CD4-positive, alpha-beta memory T cell (primary cell): ENCODE measurements at regions of chr2 and their contacts with region 1.

Region 1: DNA sequence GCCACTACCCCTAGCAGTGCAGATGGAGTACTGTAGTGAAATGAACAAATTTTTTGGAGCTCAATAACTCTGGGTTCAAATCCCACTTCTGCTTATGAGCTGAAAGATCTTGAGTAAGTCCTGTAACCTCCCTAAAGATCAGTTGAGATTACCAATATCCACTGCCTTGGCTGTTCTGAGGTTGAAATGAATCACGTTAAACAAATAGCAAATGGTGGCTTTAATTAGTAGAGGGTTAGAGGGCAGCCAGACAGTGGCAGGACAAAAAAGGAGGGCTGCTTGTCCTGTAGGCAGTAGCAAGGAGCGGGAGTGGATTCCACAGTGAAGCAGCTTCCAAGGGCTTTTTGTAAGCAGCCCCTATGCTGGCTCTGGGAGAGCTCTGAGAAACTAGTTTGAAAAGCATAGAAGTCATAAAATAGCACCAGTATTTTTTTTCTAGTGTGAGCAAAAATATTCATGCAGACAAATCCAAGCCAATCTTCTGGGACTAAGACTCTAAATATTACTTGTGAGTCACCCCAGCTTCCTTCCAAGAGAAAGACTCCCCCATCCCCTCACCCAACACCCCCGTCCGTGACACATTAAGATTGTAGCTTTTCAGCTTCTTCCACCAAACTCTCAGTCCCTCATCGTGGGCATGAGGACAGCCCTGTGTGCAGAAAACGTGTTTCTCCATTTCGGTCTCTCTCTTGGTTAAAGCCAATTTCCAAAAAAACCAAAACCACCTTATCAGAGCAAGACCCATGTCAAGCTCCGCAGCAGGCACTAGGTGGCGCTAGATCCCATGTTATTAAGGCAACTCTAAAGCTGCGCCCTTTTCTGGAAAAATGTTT is 123.5 kb upstream of the LGALSL start:
- DNase-seq: peak; percentile 70 to 79 (median 74)
- H3K4me3 ChIP-seq: no peak overlapping the region
- H3K4me3 Mint-ChIP-seq: peak overlapping the region in 7 of 8 donors; percentile 25 to 83 (median 75)
- H3K27ac ChIP-seq: no peak overlapping the region
- H3K27ac Mint-ChIP-seq: peak overlapping the region in 6 of 7 donors; percentile 33 to 92 (median 86)
- H3K4me1 ChIP-seq: peaks cover 38% of the 10 kb centered on the region
- H3K4me1 Mint-ChIP-seq: peaks cover 28 to 46% (median 34%) of the 10 kb centered on the region in 4 donors
- H3K27me3 ChIP-seq: no peaks in the 10 kb centered on the region
- H3K27me3 Mint-ChIP-seq: no peaks in the 10 kb centered on the region

Region 2: DNA sequence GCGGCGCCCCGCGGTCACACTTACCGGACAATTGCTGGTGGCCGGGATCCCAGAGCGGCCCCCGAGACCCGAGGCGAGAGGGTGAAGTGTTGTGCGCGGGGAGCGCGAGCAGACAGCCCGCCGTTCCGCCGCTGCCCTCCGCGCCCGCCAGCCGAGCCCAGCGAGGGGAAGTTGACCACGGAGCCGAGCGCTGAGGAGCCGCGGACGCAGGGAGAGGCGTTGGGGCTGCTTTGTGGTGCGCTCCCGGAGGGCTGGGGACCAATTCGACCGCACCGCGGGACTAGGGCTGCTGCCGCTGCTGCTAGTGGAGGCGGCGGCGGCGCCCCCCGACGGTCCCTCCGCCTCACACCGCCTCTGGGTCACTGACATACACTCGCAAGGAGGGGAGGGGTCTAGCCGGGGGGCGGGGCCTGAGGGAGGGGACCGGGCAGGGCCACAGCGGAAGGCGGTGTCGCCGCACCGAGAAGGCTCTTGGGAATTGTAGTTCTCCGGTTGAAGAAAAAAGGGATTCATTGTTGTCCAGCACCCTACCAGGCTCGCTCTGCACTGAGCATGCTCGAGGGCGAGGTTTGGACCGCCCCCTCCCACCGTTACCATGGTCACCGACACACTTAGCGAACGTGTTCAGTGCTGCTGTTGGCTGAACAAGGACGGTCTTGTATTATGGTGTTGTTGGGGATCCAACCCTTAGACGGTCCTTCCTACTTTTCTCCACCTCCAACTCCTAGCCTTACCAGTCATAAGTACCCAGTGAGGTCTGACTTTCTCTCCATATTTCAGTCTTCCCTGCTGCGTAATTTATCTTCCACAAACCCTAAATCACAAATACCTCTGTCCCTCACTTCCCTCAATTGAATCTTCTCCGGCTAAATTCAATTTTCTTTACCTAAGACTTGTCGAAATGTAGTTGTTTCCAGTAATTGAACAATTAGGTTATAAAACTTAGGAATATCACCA is 186.2 kb before region 1 on chr2 and contains the start of gene PELI1:
- CTCF ChIA-PET with region 1: interaction called, 24 read pairs
- POLR2A ChIA-PET with region 1: interaction called, 51 read pairs
- intact Hi-C with region 1: loop called (anchors 1 kb)
- DNase-seq: peak; percentile 86 to 94 (median 90)
- H3K4me3 ChIP-seq: peak within 1 kb of the TSS; percentile 61 to 81
- H3K4me3 Mint-ChIP-seq: peak within 1 kb of the TSS; percentile 92 to 99 (median 98)
- H3K27ac ChIP-seq: peak within 1 kb of the TSS; percentile 88
- H3K27ac Mint-ChIP-seq: peak within 1 kb of the TSS; percentile 96 to 99 (median 98)
- H3K4me1 ChIP-seq: peaks cover 53% of the 10 kb centered on the region
- H3K4me1 Mint-ChIP-seq: peaks cover 22 to 39% (median 25%) of the 10 kb centered on the region in 4 donors
- H3K27me3 ChIP-seq: no peaks in the 10 kb centered on the region
- H3K27me3 Mint-ChIP-seq: no peaks in the 10 kb centered on the region
- total RNA-seq, gene PELI1: 36.7 to 40.5 TPM

Region 3: GRCh38 chr2:64283641-64284361 is 46.7 kb before region 1 on chr2:
- CTCF ChIA-PET with region 1: interaction called, 7 read pairs
- POLR2A ChIA-PET with region 1: interaction called, 13 read pairs
- intact Hi-C with region 1: loop called (anchors 5 kb)
- DNase-seq: peak in 4 of 5 donors; percentile 29 to 49 (median 42)
- H3K4me3 ChIP-seq: peak overlapping the region; percentile 24 to 51
- H3K4me3 Mint-ChIP-seq: no peak overlapping the region
- H3K27ac ChIP-seq: peak overlapping the region; percentile 18
- H3K27ac Mint-ChIP-seq: no peak overlapping the region
- H3K4me1 ChIP-seq: peaks cover 19% of the 10 kb centered on the region
- H3K4me1 Mint-ChIP-seq: no peaks in the 10 kb centered on the region
- H3K27me3 ChIP-seq: no peaks in the 10 kb centered on the region
- H3K27me3 Mint-ChIP-seq: no peaks in the 10 kb centered on the region

Region 4: DNA sequence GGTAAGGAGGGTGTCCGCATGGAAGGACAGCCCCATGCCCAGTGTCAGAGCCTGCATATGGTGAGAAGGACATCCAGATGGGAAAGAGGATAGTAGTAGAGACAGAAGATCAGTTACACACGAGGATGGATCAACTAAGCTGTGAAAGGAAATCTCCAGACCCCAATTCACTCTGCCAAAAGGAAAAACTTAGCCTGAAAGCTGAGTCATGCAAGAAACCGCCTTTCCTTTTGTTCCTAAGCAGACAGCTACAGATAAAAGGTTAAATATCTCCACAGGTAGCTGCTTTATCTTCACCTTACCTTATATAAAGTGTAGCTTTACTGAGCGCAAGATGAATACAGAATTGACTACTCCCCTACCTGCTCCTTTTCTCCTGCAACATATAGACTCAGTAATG is 56.2 kb after region 1 on chr2:
- CTCF ChIA-PET with region 1: no interaction called
- POLR2A ChIA-PET with region 1: no interaction called
- intact Hi-C with region 1: no loop called
- DNase-seq: no peak
- H3K4me3 ChIP-seq: no peak overlapping the region
- H3K4me3 Mint-ChIP-seq: no peak overlapping the region
- H3K27ac ChIP-seq: no peak overlapping the region
- H3K27ac Mint-ChIP-seq: no peak overlapping the region
- H3K4me1 ChIP-seq: no peaks in the 10 kb centered on the region
- H3K4me1 Mint-ChIP-seq: no peaks in the 10 kb centered on the region
- H3K27me3 ChIP-seq: no peaks in the 10 kb centered on the region
- H3K27me3 Mint-ChIP-seq: peaks cover 3% of the 10 kb centered on the region in 2 donors

Region 5: DNA sequence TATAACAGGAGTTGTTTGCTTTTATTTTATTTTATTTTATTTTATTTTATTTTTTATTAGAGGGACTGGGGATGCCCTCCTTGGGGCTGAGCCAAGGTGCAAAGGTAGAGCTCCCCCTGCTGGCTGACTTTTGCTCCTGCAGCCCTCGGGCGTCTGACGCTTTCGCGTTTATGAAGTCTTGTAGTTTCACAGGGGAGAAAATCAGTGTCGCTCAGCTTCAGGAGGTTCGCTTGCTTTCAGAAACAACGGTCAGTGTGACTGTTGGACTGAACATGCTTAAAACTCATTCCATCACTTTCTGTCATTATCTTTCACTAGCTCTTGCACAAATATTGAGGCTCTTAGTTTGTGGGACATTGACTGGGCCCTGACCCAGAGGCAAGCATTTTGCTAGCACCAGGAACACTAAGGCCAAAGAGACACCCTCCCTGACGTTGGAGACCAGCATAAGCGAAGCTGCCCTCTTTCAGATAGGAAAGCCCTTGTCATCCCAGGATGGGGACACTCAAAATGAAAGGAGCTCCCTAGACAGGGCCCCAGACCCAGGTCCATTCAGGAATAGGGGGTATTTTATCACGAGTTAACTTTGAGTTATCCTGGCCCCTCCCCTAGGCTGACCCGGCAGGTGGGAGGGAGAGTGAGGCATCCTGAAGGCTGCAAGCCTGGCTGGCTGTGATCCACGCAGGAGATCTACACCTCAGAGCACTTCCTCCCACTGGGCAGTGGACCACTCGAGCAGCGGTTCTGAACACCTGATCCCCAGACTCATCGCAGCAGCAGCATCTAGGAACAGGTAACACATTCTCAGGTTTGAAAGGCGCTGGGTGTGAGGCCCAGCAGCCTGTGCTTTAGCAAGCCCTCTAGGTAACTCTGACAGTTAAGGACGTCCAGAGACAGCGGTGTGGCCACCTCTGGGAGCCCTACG is 157.8 kb after region 1 on chr2:
- CTCF ChIA-PET with region 1: interaction called, 312 read pairs
- POLR2A ChIA-PET with region 1: interaction called, 15 read pairs
- intact Hi-C with region 1: loop called (anchors 1 kb)
- DNase-seq: peak; percentile 59 to 69 (median 65)
- H3K4me3 ChIP-seq: no peak overlapping the region
- H3K4me3 Mint-ChIP-seq: peak overlapping the region in 5 of 8 donors; percentile 1 to 31 (median 7)
- H3K27ac ChIP-seq: no peak overlapping the region
- H3K27ac Mint-ChIP-seq: peak overlapping the region in 1 of 7 donors; percentile 60
- H3K4me1 ChIP-seq: peaks cover 16% of the 10 kb centered on the region
- H3K4me1 Mint-ChIP-seq: peaks cover 7 to 20% (median 13%) of the 10 kb centered on the region in 4 donors
- H3K27me3 ChIP-seq: no peaks in the 10 kb centered on the region
- H3K27me3 Mint-ChIP-seq: peaks cover 0 to 2% of the 10 kb centered on the region in 2 donors

Region 6: DNA sequence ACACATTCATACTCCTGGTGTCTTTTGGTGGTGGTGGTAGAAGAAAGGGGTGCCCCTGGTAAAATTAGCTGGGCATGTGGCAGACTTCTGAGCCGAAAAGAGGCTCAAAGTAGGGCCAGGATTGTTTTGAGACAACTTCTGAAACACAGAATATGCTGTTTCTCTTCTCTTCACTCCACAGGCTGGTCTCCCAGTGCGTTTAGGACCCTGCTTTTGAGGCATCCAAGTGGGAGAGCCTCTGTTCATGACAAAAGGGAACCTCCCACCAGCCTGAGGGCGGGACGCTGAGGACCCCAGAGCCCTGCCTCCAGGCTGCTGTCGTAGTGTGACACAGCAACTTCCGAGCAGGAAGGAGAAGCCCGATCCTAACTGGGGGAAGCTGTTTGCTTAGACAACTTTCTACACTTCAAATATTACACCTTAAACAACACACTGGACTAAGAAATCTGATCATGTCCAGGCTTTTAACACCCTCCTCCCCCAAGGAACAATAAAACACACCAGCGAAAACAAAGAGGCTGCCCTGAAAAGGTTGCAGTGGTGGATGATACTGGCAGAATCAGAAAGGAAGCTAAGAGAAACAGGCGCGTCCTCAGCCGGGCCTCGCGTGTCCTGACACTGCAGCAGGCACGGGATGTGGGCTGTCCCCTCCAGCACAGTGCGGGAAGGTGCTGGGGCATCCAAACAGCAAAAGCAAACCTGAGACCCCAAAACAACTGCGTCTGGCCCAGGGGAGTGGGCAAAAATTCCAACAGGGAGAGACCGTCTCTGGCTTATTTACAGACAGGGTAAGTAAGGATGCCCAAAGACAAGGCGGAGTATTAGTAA is 313.9 kb after region 1 on chr2:
- CTCF ChIA-PET with region 1: interaction called, 11 read pairs
- POLR2A ChIA-PET with region 1: interaction called, 3 read pairs
- intact Hi-C with region 1: loop called (anchors 1 kb)
- DNase-seq: peak in 2 of 5 donors; percentile 35 to 38
- H3K4me3 ChIP-seq: no peak overlapping the region
- H3K4me3 Mint-ChIP-seq: peak overlapping the region; percentile 82 to 92 (median 86)
- H3K27ac ChIP-seq: no peak overlapping the region
- H3K27ac Mint-ChIP-seq: peak overlapping the region; percentile 7 to 87 (median 83)
- H3K4me1 ChIP-seq: peaks cover 52% of the 10 kb centered on the region
- H3K4me1 Mint-ChIP-seq: peaks cover 28 to 70% (median 43%) of the 10 kb centered on the region in 4 donors
- H3K27me3 ChIP-seq: no peaks in the 10 kb centered on the region
- H3K27me3 Mint-ChIP-seq: no peaks in the 10 kb centered on the region

Region 7: DNA sequence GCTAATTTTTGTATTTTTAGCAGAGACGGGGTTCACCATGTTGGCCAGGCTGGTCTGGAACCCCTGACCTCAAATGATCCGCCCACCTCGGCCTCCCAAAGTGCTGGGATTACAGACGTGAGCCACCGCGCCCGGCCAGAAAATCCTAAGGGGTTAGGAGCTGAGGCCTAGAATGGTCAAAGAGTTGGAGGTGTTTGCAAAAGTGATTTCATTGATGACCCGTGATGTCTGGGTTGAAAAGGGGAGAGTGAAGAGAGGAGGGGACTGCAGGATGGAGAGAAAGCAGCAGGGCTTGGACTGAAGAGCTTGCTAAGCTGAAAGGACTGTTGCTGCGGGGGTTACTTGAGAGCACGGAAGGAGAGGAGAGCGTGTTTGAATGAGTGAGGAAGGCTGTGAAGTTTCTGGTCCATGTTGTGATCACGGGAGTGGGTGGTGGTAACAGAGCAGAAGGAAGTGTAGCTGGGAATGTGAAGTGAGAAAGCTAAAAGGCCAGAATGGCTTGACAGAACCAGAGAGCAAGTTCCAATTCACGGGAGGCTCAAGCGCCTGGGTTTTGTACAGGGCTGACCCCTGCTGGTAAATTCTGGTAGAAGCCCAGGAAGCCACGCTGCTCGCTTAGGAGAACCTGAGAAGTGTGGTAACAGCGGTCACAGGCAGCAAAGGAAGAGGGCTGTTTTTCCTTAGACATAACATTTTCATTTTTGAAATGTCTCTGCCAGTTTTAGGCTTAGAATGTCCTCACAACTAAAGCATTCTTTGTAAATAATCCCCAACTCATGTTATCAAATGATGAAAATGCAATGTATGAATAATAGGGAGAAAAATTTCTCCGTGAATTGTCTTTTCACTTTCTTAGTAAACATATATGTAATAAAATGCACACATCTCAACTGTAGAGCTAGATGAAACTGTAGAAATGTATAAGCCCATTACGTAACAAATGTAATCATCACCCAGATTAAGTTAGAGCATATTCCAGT is 856.7 kb after region 1 on chr2:
- CTCF ChIA-PET with region 1: no interaction called
- POLR2A ChIA-PET with region 1: no interaction called
- intact Hi-C with region 1: loop called (anchors 5 kb)
- DNase-seq: peak; percentile 49 to 59 (median 53)
- H3K4me3 ChIP-seq: no peak overlapping the region
- H3K4me3 Mint-ChIP-seq: peak overlapping the region in 2 of 8 donors; percentile 1 to 14
- H3K27ac ChIP-seq: no peak overlapping the region
- H3K27ac Mint-ChIP-seq: no peak overlapping the region
- H3K4me1 ChIP-seq: peaks cover 9% of the 10 kb centered on the region
- H3K4me1 Mint-ChIP-seq: peaks cover 0 to 8% (median 8%) of the 10 kb centered on the region in 4 donors
- H3K27me3 ChIP-seq: peaks cover 4% of the 10 kb centered on the region
- H3K27me3 Mint-ChIP-seq: peaks cover 5 to 17% of the 10 kb centered on the region in 2 donors